ENCODE measurements at regions of chr9 and their contacts with region 1.

Region 1: GRCh38 chr9:101269591-101270283 is 115.1 kb downstream of the BAAT start:
- DNase-seq: no peak
- H3K4me3 ChIP-seq: no peak overlapping the region
- H3K27ac ChIP-seq: no peak overlapping the region
- H3K4me1 ChIP-seq: no peaks in the 10 kb centered on the region
- CTCF ChIP-seq: no peak

Region 2: GRCh38 chr9:100848726-100849125 is 421.0 kb before region 1 on chr9:
- CTCF ChIA-PET with region 1: no interaction called
- POLR2A ChIA-PET with region 1: no interaction called
- intact Hi-C with region 1: loop called (anchors 10 kb)
- DNase-seq: no peak
- H3K4me3 ChIP-seq: no peak overlapping the region
- H3K27ac ChIP-seq: no peak overlapping the region
- H3K4me1 ChIP-seq: no peaks in the 10 kb centered on the region
- CTCF ChIP-seq: no peak

Region 3: DNA sequence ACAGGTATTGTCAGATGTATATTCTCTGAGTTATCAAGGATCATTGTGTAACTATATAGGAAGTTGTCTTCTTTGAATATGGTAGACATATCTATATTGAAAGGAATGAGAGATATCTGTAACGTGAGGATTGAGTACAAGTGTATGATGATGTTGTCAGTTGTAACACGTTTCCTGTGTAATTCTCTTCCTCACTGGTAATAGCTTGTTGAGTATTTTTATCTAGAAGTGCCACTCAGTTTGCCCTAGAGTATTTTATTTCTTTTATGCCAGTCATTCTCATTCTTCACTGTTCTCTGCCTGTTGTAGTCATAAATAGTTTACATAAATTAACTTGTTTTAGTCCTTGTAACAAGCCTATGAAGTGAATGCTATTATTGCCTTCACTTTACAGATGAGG is 57.1 kb before region 1 on chr9:
- CTCF ChIA-PET with region 1: no interaction called
- POLR2A ChIA-PET with region 1: no interaction called
- intact Hi-C with region 1: loop called (anchors 10 kb)
- DNase-seq: no peak
- H3K4me3 ChIP-seq: no peak overlapping the region
- H3K27ac ChIP-seq: no peak overlapping the region
- H3K4me1 ChIP-seq: no peaks in the 10 kb centered on the region
- CTCF ChIP-seq: no peak

Measured in OCI-LY7 (cell line).